ENCODE measurements at regions of chr10 and their contacts with region 1.

Region 1: GRCh38 chr10:70528726-70529362 is 50.3 kb downstream of the PALD1 start:
- H3K4me3 Mint-ChIP-seq: no peak overlapping the region
- H3K27ac Mint-ChIP-seq: no peak overlapping the region
- H3K4me1 Mint-ChIP-seq: peaks cover 11% of the 10 kb centered on the region
- H3K27me3 Mint-ChIP-seq: peaks cover 1% of the 10 kb centered on the region

Region 2: GRCh38 chr10:70478191-70479164 is 50.4 kb before region 1 on chr10 and contains the start of gene PALD1:
- intact Hi-C with region 1: loop called (anchors 5 kb)
- H3K4me3 Mint-ChIP-seq: peak within 1 kb of the TSS; percentile 74
- H3K27ac Mint-ChIP-seq: peak within 1 kb of the TSS; percentile 62
- H3K4me1 Mint-ChIP-seq: peaks cover 48% of the 10 kb centered on the region
- H3K27me3 Mint-ChIP-seq: peaks cover 74% of the 10 kb centered on the region

Measured in dendritic cell treated with granulocyte-macrophage colony-stimulating factor and Interleukin-4, amounts not matched to agents 40 ng/mL and 50 ng/mL, for 4 days (primary cell).